H1 (cell line): ENCODE measurements at regions of chr21 and their contacts with region 1.

Region 1: GRCh38 chr21:45270306-45270821 is 17.3 kb downstream of the POFUT2 start:
- DNase-seq: no peak
- H3K4me3 ChIP-seq: no peak overlapping the region
- H3K27ac ChIP-seq: no peak overlapping the region
- H3K4me1 ChIP-seq: no peaks in the 10 kb centered on the region
- H3K27me3 ChIP-seq: no peaks in the 10 kb centered on the region
- CTCF ChIP-seq: peak; percentile 65 to 74 (median 69)
- EP300 ChIP-seq: no peak
- POLR2A ChIP-seq: no peak
- RAD21 ChIP-seq: peak; percentile 32 to 53

Region 2: DNA sequence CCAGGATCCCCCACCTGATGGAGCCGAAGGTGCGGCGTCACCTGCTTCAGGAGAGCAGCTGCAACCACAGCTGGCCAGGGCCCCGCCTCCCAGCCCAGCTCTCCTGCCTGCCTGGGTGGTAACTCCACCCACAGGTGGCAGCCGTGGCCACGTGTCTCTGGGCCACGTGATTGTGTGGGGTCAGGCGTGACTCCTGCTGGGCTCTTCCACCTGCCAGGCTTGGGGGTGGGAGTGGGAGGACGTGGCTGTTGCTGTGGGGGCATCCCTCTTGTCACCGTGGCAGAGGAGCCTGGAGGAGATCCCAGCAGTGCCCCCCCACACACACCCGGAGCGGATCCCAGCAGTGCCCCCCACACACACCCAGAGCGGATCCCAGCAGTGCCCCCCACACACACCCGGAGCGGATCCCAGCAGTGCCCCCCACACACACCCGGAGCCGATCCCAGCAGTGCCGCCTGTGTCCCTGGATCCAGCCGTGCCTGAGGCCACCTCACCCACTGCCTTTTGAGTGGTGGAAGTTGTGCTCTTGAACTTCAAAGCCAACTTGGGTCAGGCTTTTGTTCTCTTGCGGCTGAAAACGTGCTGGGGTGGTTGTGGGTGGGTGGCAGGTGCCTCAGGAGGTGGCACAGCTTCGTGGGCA is 14.9 kb before region 1 on chr21:
- CTCF ChIA-PET with region 1: interaction called, 19 read pairs
- POLR2A ChIA-PET with region 1: no interaction called
- DNase-seq: peak in 1 of 2 experiments; percentile 45
- H3K4me3 ChIP-seq: no peak overlapping the region
- H3K27ac ChIP-seq: no peak overlapping the region
- H3K4me1 ChIP-seq: peaks cover 0 to 5% (median 0%) of the 10 kb centered on the region in 4 experiments; a peak in 2 of 7 replicates
- H3K27me3 ChIP-seq: no peaks in the 10 kb centered on the region
- CTCF ChIP-seq: no peak
- EP300 ChIP-seq: no peak
- POLR2A ChIP-seq: no peak
- RAD21 ChIP-seq: 0 out of 4 replicates have a peak, but pooled peaks of 1 of the 2 experiments have one; percentile 7

Region 3: DNA sequence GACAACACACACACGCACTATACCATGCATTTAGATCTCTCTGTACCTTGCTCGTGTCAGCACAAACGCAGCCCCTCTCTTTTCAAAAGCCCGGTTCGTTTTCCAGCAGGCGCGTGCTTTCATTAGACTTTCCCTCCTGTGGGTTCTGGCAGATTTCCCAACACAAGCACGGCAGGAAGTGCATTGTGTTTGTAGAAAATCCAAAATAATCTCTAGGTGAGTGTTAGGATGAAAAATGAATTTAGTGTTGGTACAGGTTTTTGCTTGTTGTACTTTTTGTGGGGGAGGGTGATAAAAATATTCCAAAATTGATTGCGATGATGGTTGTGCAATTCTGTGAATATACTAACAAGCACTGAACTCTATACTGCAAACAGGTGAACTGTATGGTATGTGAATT is 71.4 kb after region 1 on chr21:
- CTCF ChIA-PET with region 1: no interaction called
- POLR2A ChIA-PET with region 1: no interaction called
- DNase-seq: no peak
- H3K4me3 ChIP-seq: no peak overlapping the region
- H3K27ac ChIP-seq: no peak overlapping the region
- H3K4me1 ChIP-seq: no peaks in the 10 kb centered on the region
- H3K27me3 ChIP-seq: no peaks in the 10 kb centered on the region; a peak in 2 of 7 replicates
- CTCF ChIP-seq: no peak
- EP300 ChIP-seq: no peak
- POLR2A ChIP-seq: no peak
- RAD21 ChIP-seq: no peak

Region 4: DNA sequence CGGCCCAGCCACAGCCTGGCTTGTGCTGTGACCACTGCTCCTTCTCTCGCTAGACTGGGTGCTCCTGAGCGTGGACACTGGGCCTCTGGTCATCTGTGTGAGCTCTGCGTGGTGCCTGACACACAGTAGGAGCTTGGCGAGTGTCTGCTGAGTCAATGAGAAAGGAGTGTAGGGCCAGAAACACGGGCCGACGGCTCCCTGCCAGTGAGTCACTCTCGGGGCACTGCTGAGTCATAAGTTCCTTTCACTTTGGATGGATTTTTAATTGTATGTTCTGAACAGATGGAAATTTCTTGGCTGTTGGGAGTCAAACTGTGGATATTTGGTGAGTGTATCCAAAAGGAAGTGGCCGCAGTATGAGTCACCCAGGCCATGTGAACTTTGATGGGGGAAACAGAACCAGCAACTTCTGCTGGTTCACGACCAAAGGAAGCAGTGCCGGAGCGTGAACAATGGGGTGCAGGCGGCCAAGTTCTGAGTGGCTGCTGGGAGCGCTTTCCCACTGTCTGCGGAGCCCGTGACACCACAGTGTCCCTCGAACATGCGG is 93.6 kb after region 1 on chr21:
- CTCF ChIA-PET with region 1: no interaction called
- POLR2A ChIA-PET with region 1: no interaction called
- DNase-seq: no peak
- H3K4me3 ChIP-seq: no peak overlapping the region
- H3K27ac ChIP-seq: no peak overlapping the region
- H3K4me1 ChIP-seq: peaks cover 7 to 32% (median 20%) of the 10 kb centered on the region in 4 experiments
- H3K27me3 ChIP-seq: no peaks in the 10 kb centered on the region; a peak in 3 of 7 replicates
- CTCF ChIP-seq: no peak
- EP300 ChIP-seq: no peak
- POLR2A ChIP-seq: no peak
- RAD21 ChIP-seq: no peak